ENCODE measurements at regions of chr5 and their contacts with region 1.

Region 1: GRCh38 chr5:53095931-53096525 is 13.5 kb downstream of the MOCS2 start:
- DNase-seq: peak in 5 of 10 donors; percentile 28 to 72 (median 66)

Region 2: GRCh38 chr5:52948418-52949076 is 147.5 kb before region 1 on chr5:
- intact Hi-C with region 1: loop called (anchors 1 kb)
- DNase-seq: peak in 7 of 10 donors; percentile 34 to 82 (median 54)

Region 3: DNA sequence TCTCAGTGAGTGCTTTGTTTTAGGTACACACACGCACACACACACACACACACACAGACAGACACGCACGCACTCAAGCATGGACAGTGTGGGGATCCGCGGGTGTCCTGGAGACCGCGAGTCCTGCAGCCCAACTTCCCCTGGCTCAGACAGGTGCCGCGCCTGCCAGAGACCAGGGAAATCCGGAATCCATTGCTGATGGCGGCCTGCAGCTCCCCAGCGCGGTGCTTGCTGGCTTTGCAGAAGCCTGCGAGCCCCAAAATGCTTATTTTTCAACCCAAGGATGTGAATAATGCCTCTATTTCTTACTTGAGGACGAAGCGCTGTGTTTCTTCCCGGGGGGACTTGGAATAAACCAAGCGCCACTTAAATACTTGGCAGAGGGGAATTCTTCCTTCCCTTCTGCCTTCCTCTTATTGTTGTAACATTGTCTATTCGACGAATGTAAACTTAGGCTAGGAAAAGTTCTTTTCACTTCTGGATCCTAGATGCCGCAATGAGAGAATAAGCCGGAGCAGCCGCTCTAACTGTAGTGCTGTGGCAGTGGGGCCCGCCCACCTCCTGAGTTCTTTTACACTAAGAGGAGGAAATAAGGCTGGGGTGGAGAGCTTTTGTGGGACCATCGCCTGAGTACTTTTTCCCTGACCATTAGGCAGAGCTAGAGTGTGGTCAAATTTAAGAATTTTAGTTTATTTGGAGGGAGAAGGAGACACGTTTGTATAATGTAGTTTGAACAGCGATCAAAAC is 106.1 kb before region 1 on chr5:
- intact Hi-C with region 1: loop called (anchors 10 kb)
- DNase-seq: peak; percentile 20 to 94 (median 59)

Region 4: DNA sequence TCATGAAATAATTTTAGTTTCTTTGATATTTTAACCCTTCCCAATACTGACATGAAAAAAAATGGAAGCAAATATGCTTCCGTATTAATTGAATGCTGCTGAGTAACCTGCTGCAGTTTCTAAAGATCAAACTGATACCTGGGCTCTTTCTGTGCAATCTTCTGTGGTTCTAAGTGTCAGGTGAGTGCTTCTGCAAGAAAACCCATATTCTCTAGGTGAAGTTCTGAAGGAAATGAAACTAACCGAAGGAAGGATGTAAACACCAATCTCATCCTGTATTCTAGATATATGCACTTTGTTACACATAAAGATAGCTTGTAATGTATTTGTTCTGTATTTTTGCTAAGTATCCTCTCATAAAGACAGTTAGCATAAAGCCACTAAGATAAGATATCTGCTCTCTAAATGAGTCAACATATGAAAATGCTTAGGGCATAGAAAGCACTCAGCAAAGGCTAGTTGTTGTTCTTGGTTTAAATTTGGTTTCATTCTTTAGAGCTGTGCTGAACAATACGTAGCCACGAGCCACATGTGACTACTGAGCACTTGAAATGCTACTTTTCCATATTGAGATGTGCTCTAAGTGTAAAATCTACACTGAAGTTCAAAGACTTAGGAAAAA is 54.8 kb before region 1 on chr5:
- intact Hi-C with region 1: no loop called
- DNase-seq: no peak

Measured in posterior cingulate gyrus (tissue), 11 donors.